ENCODE measurements at regions of chr12 and their contacts with region 1.

Region 1: DNA sequence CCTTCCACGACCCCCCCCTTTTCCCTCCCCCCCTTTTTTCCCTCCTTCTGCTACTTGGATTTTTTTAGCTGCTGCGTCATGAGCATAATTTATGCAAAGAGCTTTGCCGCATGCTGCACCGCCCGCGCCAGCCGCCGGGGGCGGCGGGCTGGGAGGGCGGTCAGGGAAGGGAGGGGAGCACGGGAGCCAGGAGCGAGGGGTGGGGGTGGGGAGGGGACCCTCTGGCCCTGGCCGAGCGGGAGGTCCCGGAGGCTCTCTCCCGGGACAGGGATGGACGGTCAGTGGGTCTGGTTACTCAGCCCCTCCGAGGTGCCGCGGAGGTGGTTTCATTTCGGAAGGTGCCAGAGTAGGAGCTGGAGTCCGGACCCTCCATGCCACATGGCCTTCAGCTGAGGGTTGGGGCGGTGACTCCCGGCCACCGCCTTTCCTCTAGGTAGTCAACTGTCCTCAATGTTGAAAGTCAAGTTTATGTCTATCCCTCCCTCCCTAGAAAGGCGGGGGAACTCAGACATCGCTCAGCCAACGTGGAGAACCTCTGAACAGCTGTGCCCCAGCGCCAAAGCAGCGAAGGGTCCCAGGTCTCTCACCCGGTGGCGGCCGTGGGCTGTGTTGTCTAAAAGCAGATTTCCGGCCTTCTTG is at the start of gene POU6F1:
- DNase-seq: peak; percentile 74
- H3K4me3 Mint-ChIP-seq: peak within 1 kb of the TSS; percentile 85
- H3K27ac Mint-ChIP-seq: peak within 1 kb of the TSS; percentile 90
- H3K4me1 Mint-ChIP-seq: peaks cover 18% of the 10 kb centered on the region
- H3K27me3 Mint-ChIP-seq: no peaks in the 10 kb centered on the region
- total RNA-seq, gene POU6F1: 4.7 to 6.3 TPM

Region 2: DNA sequence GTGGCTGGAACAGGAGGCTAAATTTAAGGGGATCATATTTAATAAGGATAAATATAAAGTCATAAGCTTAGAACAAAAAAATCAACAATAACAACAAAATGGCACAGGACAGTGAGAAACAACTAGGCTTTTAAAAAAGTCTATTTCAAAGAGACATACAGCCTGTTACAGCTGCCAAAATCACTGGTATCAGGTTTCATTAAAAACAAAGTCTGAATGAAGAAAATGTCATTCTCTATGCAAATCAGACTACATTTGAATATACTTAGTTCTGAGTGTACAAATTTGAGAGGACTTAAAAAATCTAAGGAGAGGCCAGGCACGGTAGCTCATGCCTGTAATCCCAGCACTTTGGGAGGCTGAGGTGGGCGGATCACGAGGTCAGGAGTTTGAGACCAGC is 89.2 kb before region 1 on chr12:
- CTCF ChIA-PET with region 1: no interaction called
- POLR2A ChIA-PET with region 1: no interaction called
- DNase-seq: no peak
- H3K4me3 Mint-ChIP-seq: no peak overlapping the region
- H3K27ac Mint-ChIP-seq: no peak overlapping the region
- H3K4me1 Mint-ChIP-seq: no peaks in the 10 kb centered on the region
- H3K27me3 Mint-ChIP-seq: no peaks in the 10 kb centered on the region

Region 3: GRCh38 chr12:51205350-51205749 is 12.7 kb before region 1 on chr12:
- CTCF ChIA-PET with region 1: interaction called, 14 read pairs
- POLR2A ChIA-PET with region 1: no interaction called
- DNase-seq: no peak
- H3K4me3 Mint-ChIP-seq: no peak overlapping the region
- H3K27ac Mint-ChIP-seq: no peak overlapping the region
- H3K4me1 Mint-ChIP-seq: peaks cover 15% of the 10 kb centered on the region
- H3K27me3 Mint-ChIP-seq: no peaks in the 10 kb centered on the region

Region 4: DNA sequence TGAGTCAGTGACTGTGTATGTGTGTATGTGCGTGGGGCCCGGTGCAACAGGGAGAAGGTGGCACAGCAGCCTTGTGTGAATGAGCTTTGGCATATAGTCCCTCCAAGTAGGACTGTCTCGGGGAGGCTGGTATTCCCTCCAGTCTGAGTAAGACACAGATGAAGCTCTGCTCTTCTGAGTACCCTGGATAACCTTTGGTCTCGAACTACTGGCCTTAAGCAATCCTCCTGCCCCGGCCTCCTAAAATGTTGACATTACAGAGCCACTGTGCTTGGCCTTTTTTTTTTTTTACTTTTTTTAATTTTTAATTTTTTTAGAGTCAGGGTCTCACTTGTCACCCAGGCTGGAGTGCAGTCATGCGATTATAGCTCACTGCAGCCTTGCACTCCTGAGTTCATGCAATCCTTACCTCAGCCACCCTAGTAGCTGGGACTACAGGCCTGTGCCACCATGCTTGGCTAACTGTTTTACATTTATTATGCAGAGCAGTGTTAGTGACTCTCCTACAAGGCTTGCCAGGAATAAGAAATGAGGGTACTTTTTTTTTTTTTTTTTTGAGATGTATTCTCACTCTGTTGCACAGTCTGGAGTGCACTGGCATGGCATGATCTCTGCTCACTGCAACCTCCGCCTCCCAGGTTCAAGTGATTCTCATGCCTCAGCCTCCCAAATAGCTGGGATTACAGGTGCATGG is 11.2 kb after region 1 on chr12:
- CTCF ChIA-PET with region 1: interaction called, 17 read pairs
- POLR2A ChIA-PET with region 1: no interaction called
- DNase-seq: no peak
- H3K4me3 Mint-ChIP-seq: no peak overlapping the region
- H3K27ac Mint-ChIP-seq: no peak overlapping the region
- H3K4me1 Mint-ChIP-seq: peaks cover 4% of the 10 kb centered on the region
- H3K27me3 Mint-ChIP-seq: peaks cover 5% of the 10 kb centered on the region

Measured in activated CD4-positive, alpha-beta T cell treated with anti-CD3 and anti-CD28 coated beads, Interleukin-2, amount 10 ng/mL, durations not matched to agents 7 days and 5 days (primary cell).